IMR-90 (cell line): ENCODE measurements at regions of chr2 and their contacts with region 1.

Region 1: GRCh38 chr2:177332041-177332991 is 60.3 kb upstream of the AGPS start:
- DNase-seq: peak; percentile 83
- ATAC-seq: peak; percentile 74
- H3K4me3 ChIP-seq: no peak overlapping the region
- H3K27ac ChIP-seq: peak overlapping the region; percentile 98
- H3K4me1 ChIP-seq: peaks cover 18% of the 10 kb centered on the region
- H3K27me3 ChIP-seq: no peaks in the 10 kb centered on the region
- CTCF ChIP-seq: peak; percentile 78
- POLR2A ChIP-seq: no peak
- RAD21 ChIP-seq: peak; percentile 78

Region 2: GRCh38 chr2:177239932-177240630 is 92.2 kb before region 1 on chr2:
- CTCF ChIA-PET with region 1: no interaction called
- POLR2A ChIA-PET with region 1: no interaction called
- dilution Hi-C with region 1: no loop called
- in situ Hi-C with region 1: no loop called
- intact Hi-C with region 1: loop called (anchors 5 kb)
- DNase-seq: peak; percentile 49
- ATAC-seq: no peak
- H3K4me3 ChIP-seq: no peak overlapping the region
- H3K27ac ChIP-seq: peak overlapping the region; percentile 82
- H3K4me1 ChIP-seq: peaks cover 32% of the 10 kb centered on the region
- H3K27me3 ChIP-seq: no peaks in the 10 kb centered on the region
- CTCF ChIP-seq: no peak
- POLR2A ChIP-seq: no peak
- RAD21 ChIP-seq: no peak

Region 3: GRCh38 chr2:177413703-177414102 is 81.4 kb after region 1 on chr2:
- CTCF ChIA-PET with region 1: interaction called, 13 read pairs
- POLR2A ChIA-PET with region 1: no interaction called
- dilution Hi-C with region 1: no loop called
- in situ Hi-C with region 1: loop called (anchors 5 kb)
- intact Hi-C with region 1: loop called (anchors 1 kb)
- DNase-seq: no peak
- ATAC-seq: no peak
- H3K4me3 ChIP-seq: no peak overlapping the region
- H3K27ac ChIP-seq: no peak overlapping the region
- H3K4me1 ChIP-seq: no peaks in the 10 kb centered on the region
- H3K27me3 ChIP-seq: no peaks in the 10 kb centered on the region
- CTCF ChIP-seq: no peak
- POLR2A ChIP-seq: no peak
- RAD21 ChIP-seq: no peak

Region 4: GRCh38 chr2:177552422-177553175 is 220.3 kb after region 1 on chr2:
- CTCF ChIA-PET with region 1: no interaction called
- POLR2A ChIA-PET with region 1: no interaction called
- dilution Hi-C with region 1: no loop called
- in situ Hi-C with region 1: no loop called
- intact Hi-C with region 1: loop called (anchors 5 kb)
- DNase-seq: peak; percentile 88
- ATAC-seq: peak; percentile 97
- H3K4me3 ChIP-seq: peak overlapping the region; percentile 59
- H3K27ac ChIP-seq: peak overlapping the region; percentile 87
- H3K4me1 ChIP-seq: no peaks in the 10 kb centered on the region
- H3K27me3 ChIP-seq: no peaks in the 10 kb centered on the region
- CTCF ChIP-seq: no peak
- POLR2A ChIP-seq: no peak; the same call in 1 of the 2 replicates
- RAD21 ChIP-seq: no peak

Region 5: GRCh38 chr2:177724398-177725287 is 392.3 kb after region 1 on chr2:
- CTCF ChIA-PET with region 1: interaction called, 6 read pairs
- POLR2A ChIA-PET with region 1: no interaction called
- dilution Hi-C with region 1: no loop called
- in situ Hi-C with region 1: loop called (anchors 10 kb)
- intact Hi-C with region 1: loop called (anchors 1 kb)
- DNase-seq: peak; percentile 42
- ATAC-seq: peak; percentile 85
- H3K4me3 ChIP-seq: no peak overlapping the region
- H3K27ac ChIP-seq: no peak overlapping the region
- H3K4me1 ChIP-seq: no peaks in the 10 kb centered on the region
- H3K27me3 ChIP-seq: peaks cover 8% of the 10 kb centered on the region
- CTCF ChIP-seq: peak; percentile 82
- POLR2A ChIP-seq: no peak
- RAD21 ChIP-seq: peak; percentile 87